Activated B cell treated with CpG ODN at 0.5 μM for 24 hours (primary cell): ENCODE measurements at regions of chr9 and their contacts with region 1.

Region 1: DNA sequence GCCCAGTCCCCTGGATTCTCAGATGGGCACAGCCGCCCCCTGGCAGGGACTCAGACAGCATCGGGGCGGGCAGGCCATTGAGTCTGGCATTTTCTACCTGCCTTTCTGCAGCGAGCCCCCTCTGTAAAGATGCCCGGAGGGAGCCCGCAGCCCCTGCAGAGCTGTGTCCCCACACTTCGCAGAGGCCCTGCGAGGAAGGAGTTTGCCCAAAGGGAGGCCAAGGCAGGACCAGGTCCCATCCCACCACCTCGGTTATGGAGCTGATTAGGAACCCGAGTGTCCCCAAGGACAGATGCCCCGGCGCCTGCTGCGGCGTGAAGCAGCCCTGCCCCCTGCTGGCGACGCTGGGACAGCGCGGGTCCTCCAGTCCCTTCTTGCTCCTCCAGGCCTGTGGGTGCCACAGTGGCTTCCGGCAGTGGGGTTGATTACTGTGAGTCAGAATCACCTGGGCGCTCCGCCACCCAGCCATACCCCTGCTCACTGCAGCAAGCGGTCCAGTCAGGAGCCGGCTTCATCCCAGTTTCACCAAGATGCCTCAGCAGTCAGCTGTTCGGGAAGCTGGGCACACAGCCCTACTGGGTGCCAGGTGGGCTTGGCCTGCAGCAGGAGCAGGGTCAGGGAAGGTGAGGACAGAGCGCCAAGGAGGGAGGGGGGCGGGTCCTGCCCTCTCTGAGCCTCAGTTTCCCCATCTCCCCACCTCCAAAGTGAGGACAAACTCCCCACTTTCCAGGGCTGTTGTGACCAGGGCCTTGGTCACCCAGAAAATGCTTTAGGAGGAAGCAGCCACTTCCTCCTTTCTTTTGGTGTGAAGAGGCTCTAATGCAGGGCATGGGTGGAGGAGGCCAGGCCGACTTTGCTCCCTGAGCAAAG is 117.1 kb downstream of the RXRA start:
- DNase-seq: peak; percentile 73
- ATAC-seq: peak; percentile 99
- H3K4me3 Mint-ChIP-seq: peak overlapping the region; percentile 19
- H3K27ac Mint-ChIP-seq: peak overlapping the region; percentile 31
- H3K4me1 Mint-ChIP-seq: peaks cover 18% of the 10 kb centered on the region
- H3K27me3 Mint-ChIP-seq: peaks cover 21% of the 10 kb centered on the region
- CTCF ChIP-seq: peak; percentile 86

Region 2: GRCh38 chr9:134170532-134171315 is 272.7 kb before region 1 on chr9:
- CTCF ChIA-PET with region 1: interaction called, 56 read pairs
- POLR2A ChIA-PET with region 1: interaction called, 10 read pairs
- intact Hi-C with region 1: loop called (anchors 1 kb)
- DNase-seq: no peak
- ATAC-seq: no peak
- H3K4me3 Mint-ChIP-seq: no peak overlapping the region
- H3K27ac Mint-ChIP-seq: no peak overlapping the region
- H3K4me1 Mint-ChIP-seq: peaks cover 17% of the 10 kb centered on the region
- H3K27me3 Mint-ChIP-seq: no peaks in the 10 kb centered on the region
- CTCF ChIP-seq: no peak

Region 3: GRCh38 chr9:134258828-134259546 is 184.4 kb before region 1 on chr9:
- CTCF ChIA-PET with region 1: no interaction called
- POLR2A ChIA-PET with region 1: no interaction called
- intact Hi-C with region 1: no loop called
- DNase-seq: no peak
- ATAC-seq: no peak
- H3K4me3 Mint-ChIP-seq: no peak overlapping the region
- H3K27ac Mint-ChIP-seq: no peak overlapping the region
- H3K4me1 Mint-ChIP-seq: peaks cover 4% of the 10 kb centered on the region
- H3K27me3 Mint-ChIP-seq: peaks cover 6% of the 10 kb centered on the region
- CTCF ChIP-seq: no peak

Region 4: GRCh38 chr9:134364391-134365114 is 78.8 kb before region 1 on chr9:
- CTCF ChIA-PET with region 1: interaction called, 5 read pairs
- POLR2A ChIA-PET with region 1: no interaction called
- intact Hi-C with region 1: loop called (anchors 1 kb)
- DNase-seq: no peak
- ATAC-seq: no peak
- H3K4me3 Mint-ChIP-seq: no peak overlapping the region
- H3K27ac Mint-ChIP-seq: no peak overlapping the region
- H3K4me1 Mint-ChIP-seq: peaks cover 2% of the 10 kb centered on the region
- H3K27me3 Mint-ChIP-seq: no peaks in the 10 kb centered on the region
- CTCF ChIP-seq: no peak

Region 5: GRCh38 chr9:134391314-134392231 is 51.8 kb before region 1 on chr9:
- CTCF ChIA-PET with region 1: interaction called, 3 read pairs
- POLR2A ChIA-PET with region 1: interaction called, 4 read pairs
- intact Hi-C with region 1: loop called (anchors 2 kb)
- DNase-seq: peak; percentile 62
- ATAC-seq: peak; percentile 59
- H3K4me3 Mint-ChIP-seq: peak overlapping the region; percentile 81
- H3K27ac Mint-ChIP-seq: peak overlapping the region; percentile 98
- H3K4me1 Mint-ChIP-seq: peaks cover 66% of the 10 kb centered on the region
- H3K27me3 Mint-ChIP-seq: no peaks in the 10 kb centered on the region
- CTCF ChIP-seq: no peak

Region 6: GRCh38 chr9:134475011-134475790 is 31.8 kb after region 1 on chr9:
- CTCF ChIA-PET with region 1: no interaction called
- POLR2A ChIA-PET with region 1: no interaction called
- intact Hi-C with region 1: no loop called
- DNase-seq: peak; percentile 29
- ATAC-seq: peak; percentile 91
- H3K4me3 Mint-ChIP-seq: no peak overlapping the region
- H3K27ac Mint-ChIP-seq: peak overlapping the region; percentile 86
- H3K4me1 Mint-ChIP-seq: peaks cover 10% of the 10 kb centered on the region
- H3K27me3 Mint-ChIP-seq: no peaks in the 10 kb centered on the region
- CTCF ChIP-seq: no peak